ENCODE measurements at regions of chr11 and their contacts with region 1.

Region 1: DNA sequence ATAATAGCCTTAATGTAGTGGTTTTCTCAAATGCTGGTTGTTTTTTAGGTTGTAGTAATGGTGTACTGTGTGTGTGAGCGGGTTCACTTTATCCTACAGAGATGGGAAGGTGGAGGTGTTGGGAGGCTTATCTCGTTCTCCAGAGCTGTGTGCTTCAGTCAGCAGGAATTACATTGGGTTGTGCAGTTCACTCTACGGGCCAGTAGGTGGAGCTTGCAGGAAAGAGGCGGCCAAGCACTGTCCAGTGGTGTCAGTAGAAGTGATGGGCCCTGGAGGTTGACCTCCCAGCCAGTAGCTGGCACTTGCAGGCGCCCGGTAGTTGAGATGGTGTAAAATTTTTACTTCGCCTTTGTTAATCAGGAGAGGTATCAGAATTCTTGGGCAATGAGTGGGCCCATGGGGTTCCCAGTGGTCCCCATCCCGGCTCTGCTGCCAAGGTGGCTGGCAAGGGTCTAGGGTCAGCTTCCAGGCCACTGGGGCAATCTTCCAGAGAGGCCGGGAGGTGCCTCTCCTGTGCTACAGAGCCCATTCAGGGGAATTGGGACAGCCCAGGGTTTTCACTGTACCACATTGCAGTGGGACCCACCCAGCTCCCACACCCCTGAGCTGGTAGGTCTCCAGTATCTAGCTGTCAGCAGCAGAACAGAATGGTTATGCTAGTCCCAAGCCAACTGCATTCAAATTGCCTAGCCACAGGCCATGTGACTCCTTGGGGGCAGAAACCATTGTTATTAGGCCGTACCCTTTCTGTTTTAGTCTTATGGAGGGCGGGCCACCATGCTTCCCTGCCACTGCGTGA is 43.9 kb downstream of the BIRC2 start:
- DNase-seq: peak; percentile 68
- ATAC-seq: peak; percentile 78
- H3K4me3 Mint-ChIP-seq: no peak overlapping the region
- H3K27ac Mint-ChIP-seq: peak overlapping the region; percentile 44
- H3K4me1 Mint-ChIP-seq: peaks cover 41% of the 10 kb centered on the region
- H3K27me3 Mint-ChIP-seq: no peaks in the 10 kb centered on the region

Region 2: GRCh38 chr11:102293873-102294601 is 96.8 kb before region 1 on chr11:
- CTCF ChIA-PET with region 1: interaction called, 12 read pairs
- POLR2A ChIA-PET with region 1: no interaction called
- intact Hi-C with region 1: no loop called
- DNase-seq: no peak
- ATAC-seq: peak; percentile 95
- H3K4me3 Mint-ChIP-seq: peak overlapping the region; percentile 68
- H3K27ac Mint-ChIP-seq: peak overlapping the region; percentile 95
- H3K4me1 Mint-ChIP-seq: peaks cover 27% of the 10 kb centered on the region
- H3K27me3 Mint-ChIP-seq: no peaks in the 10 kb centered on the region

Region 3: DNA sequence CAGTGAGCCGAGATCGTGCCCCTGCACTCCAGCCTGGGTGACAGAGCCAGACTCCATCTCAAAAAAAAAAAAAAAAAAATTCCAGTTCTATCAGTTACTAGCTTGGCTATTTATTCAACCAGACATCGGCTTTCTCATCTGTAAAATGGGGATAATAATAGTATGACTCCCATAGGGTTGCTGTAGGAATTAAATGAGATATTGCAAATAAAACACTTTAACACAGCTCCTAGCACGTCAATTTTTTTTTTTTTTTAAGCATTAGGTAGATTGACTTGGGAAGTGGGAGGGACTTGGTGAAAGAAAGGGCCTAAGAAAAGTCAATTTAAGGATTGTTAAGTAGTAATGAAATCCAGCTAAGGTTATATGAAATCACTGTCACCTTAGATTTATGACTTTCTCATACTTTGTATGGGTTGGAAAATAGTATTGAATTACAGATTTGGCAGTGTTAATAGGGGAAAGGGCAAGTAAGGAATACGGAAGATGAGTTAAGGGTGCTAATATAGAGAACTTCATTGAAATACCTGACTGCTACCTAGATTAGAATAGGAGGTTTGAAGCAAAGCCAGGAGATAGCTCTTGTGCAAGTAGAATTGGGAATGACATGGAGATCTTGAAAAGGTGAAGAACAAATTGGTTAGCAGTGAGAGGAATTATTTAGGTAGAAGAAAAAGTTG is 15.0 kb before region 1 on chr11:
- CTCF ChIA-PET with region 1: interaction called, 15 read pairs
- POLR2A ChIA-PET with region 1: interaction called, 7 read pairs
- intact Hi-C with region 1: no loop called
- DNase-seq: no peak
- ATAC-seq: no peak
- H3K4me3 Mint-ChIP-seq: no peak overlapping the region
- H3K27ac Mint-ChIP-seq: no peak overlapping the region
- H3K4me1 Mint-ChIP-seq: peaks cover 28% of the 10 kb centered on the region
- H3K27me3 Mint-ChIP-seq: no peaks in the 10 kb centered on the region

Region 4: DNA sequence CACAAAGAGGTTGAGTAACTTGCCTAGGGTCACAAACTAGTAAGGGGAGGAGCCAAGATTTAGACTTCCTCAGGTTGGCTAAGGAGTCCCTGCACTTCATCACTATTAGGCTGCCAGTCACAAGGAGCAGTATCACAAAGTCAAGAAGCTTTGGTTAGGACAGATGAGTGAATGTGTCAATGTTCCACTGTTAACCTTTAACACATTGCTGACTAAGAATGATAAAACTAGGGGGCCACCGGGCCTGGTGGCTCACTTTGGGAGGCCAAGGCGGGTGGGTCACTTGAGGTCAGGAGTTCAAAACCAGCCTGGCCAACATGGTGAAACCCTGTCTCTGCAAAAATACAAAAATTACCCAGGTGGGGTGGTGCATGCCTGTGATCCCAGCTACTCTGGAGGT is 29.7 kb after region 1 on chr11:
- CTCF ChIA-PET with region 1: interaction called, 30 read pairs
- POLR2A ChIA-PET with region 1: no interaction called
- intact Hi-C with region 1: loop called (anchors 2 kb)
- DNase-seq: peak; percentile 59
- ATAC-seq: peak; percentile 73
- H3K4me3 Mint-ChIP-seq: no peak overlapping the region
- H3K27ac Mint-ChIP-seq: peak overlapping the region; percentile 53
- H3K4me1 Mint-ChIP-seq: peaks cover 95% of the 10 kb centered on the region
- H3K27me3 Mint-ChIP-seq: no peaks in the 10 kb centered on the region

Region 5: DNA sequence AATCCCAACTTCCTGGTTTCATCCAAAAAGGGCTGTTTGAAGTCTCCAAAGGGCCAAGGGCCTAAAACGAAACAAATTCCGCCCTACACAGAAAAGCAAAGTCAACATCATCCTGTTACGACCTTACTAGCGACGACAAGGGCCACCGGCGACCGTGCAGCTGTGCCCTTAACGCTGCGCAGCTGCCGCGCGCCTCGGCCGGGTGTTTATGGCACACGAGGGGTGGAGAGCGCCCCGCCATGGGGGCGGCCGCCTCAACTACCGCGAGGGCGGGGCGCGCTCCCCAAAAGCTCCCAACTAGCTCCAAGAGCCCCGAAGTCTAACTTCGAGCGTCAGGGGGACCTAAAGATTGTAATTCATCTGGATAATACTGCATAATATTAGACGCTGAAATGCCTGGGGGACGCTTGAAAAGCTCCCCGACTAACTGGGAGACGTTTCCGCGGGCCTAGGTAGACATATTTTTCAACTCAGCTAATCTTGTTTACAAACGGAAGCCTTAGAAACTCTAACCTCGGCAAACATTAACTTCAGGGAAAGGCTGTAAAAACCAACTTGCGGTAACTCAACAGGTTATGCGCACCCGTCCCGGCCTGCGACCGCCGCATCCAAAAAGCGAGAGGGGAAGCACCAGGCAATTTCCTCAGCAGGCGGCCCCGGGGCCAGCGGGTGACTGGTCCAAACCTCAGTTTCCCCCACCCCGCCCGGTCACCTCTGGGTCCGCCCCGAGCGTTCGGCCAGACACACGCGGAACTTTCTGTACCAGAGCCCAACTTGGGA is 61.0 kb after region 1 on chr11:
- CTCF ChIA-PET with region 1: interaction called, 18 read pairs
- POLR2A ChIA-PET with region 1: interaction called, 7 read pairs
- intact Hi-C with region 1: loop called (anchors 1 kb)
- DNase-seq: peak; percentile 90
- ATAC-seq: peak; percentile 66
- H3K4me3 Mint-ChIP-seq: peak overlapping the region; percentile 86
- H3K27ac Mint-ChIP-seq: peak overlapping the region; percentile 91
- H3K4me1 Mint-ChIP-seq: peaks cover 82% of the 10 kb centered on the region
- H3K27me3 Mint-ChIP-seq: no peaks in the 10 kb centered on the region

Region 6: GRCh38 chr11:102495161-102496042 is 104.5 kb after region 1 on chr11:
- CTCF ChIA-PET with region 1: interaction called, 30 read pairs
- POLR2A ChIA-PET with region 1: no interaction called
- intact Hi-C with region 1: loop called (anchors 1 kb)
- DNase-seq: peak; percentile 40
- ATAC-seq: peak; percentile 68
- H3K4me3 Mint-ChIP-seq: no peak overlapping the region
- H3K27ac Mint-ChIP-seq: no peak overlapping the region
- H3K4me1 Mint-ChIP-seq: peaks cover 28% of the 10 kb centered on the region
- H3K27me3 Mint-ChIP-seq: peaks cover 4% of the 10 kb centered on the region

Region 7: DNA sequence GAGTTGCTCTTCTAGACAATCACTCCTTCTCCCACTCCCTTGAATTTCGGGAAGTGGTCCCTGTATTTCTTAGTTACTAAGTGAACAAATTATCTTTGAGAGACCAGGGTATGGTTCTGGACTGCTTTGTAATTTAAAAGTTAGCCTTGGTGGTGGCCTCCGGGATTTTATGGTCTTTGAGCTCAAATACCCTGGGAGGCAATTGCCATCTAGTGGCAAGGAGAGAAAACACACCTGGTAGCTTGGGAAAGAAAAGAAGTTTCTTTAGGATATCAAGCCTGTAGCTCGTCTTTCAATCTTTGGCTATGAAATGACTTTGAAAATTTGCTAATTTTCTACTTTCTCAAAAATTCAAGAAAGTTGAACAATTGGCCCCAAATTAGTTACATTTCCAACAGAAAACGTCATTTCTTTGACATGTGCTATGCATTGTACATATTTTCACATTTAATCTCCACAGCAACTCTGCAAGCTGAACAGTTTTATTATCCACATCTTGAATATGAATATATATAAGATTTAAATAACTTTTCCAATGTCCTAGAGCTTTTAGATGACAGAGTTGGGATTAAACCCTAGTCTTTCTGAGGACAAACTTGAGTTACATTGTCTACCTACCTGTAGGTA is 275.6 kb after region 1 on chr11:
- CTCF ChIA-PET with region 1: interaction called, 7 read pairs
- POLR2A ChIA-PET with region 1: interaction called, 4 read pairs
- intact Hi-C with region 1: loop called in 1 of 2 experiments (anchors 1 kb)
- DNase-seq: peak; percentile 37
- ATAC-seq: peak; percentile 64
- H3K4me3 Mint-ChIP-seq: no peak overlapping the region
- H3K27ac Mint-ChIP-seq: no peak overlapping the region
- H3K4me1 Mint-ChIP-seq: no peaks in the 10 kb centered on the region
- H3K27me3 Mint-ChIP-seq: peaks cover 2% of the 10 kb centered on the region